ENCODE measurements at regions of chr5 and their contacts with region 1.

Region 1: GRCh38 chr5:148730943-148731861 is 76.9 kb upstream of the HTR4 start:
- DNase-seq: peak; percentile 89
- H3K4me3 Mint-ChIP-seq: peak overlapping the region; percentile 9
- H3K27ac Mint-ChIP-seq: peak overlapping the region; percentile 3
- H3K4me1 Mint-ChIP-seq: peaks cover 7% of the 10 kb centered on the region
- H3K27me3 Mint-ChIP-seq: peaks cover 17% of the 10 kb centered on the region

Region 2: DNA sequence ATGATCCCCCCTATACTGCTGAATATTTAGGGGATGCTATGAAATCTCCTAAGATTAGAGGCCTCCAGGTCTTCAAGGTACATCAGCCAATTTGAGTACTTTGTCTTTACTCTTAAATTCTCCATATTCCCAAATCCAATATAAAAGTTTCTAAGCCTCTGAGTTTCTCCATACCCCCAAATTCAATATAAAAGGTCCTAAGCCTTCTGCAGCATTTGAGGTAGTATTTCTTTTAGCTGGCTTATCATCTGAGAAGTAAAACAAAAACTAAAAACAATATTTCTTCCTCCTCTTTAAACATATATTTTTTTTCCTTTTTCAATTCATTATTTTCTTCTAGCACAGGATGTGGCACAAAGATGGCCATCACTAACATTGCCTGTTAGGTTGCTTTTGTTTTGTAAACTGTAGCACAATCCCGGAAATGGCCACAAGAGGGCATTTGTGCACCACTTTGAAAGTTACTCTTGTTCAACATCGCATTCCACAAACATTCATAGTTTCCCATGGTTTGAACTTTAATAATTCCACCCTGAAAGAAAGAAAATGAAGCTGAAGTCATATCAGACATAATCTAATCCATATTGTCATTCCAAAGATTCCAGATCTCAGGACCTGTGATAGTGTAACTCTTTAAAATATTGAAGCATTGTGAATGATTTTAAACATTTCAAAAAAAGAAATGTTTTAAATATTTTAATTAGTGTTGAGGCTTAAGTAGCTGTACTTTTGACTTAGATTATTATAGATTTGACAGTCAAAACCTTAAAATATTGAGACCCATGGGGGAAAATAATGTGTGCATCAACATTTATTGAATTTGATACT is 873.7 kb before region 1 on chr5:
- intact Hi-C with region 1: loop called (anchors 2 kb)
- DNase-seq: peak; percentile 82
- H3K4me3 Mint-ChIP-seq: no peak overlapping the region
- H3K27ac Mint-ChIP-seq: no peak overlapping the region
- H3K4me1 Mint-ChIP-seq: no peaks in the 10 kb centered on the region
- H3K27me3 Mint-ChIP-seq: peaks cover 13% of the 10 kb centered on the region

Region 3: GRCh38 chr5:148179234-148179824 is 551.9 kb before region 1 on chr5:
- intact Hi-C with region 1: loop called (anchors 1 kb)
- DNase-seq: peak; percentile 73
- H3K4me3 Mint-ChIP-seq: no peak overlapping the region
- H3K27ac Mint-ChIP-seq: no peak overlapping the region
- H3K4me1 Mint-ChIP-seq: peaks cover 3% of the 10 kb centered on the region
- H3K27me3 Mint-ChIP-seq: peaks cover 15% of the 10 kb centered on the region

Region 4: GRCh38 chr5:148482691-148483462 is 248.3 kb before region 1 on chr5:
- intact Hi-C with region 1: loop called (anchors 2 kb)
- DNase-seq: peak; percentile 88
- H3K4me3 Mint-ChIP-seq: no peak overlapping the region
- H3K27ac Mint-ChIP-seq: no peak overlapping the region
- H3K4me1 Mint-ChIP-seq: peaks cover 5% of the 10 kb centered on the region
- H3K27me3 Mint-ChIP-seq: peaks cover 32% of the 10 kb centered on the region

Region 5: DNA sequence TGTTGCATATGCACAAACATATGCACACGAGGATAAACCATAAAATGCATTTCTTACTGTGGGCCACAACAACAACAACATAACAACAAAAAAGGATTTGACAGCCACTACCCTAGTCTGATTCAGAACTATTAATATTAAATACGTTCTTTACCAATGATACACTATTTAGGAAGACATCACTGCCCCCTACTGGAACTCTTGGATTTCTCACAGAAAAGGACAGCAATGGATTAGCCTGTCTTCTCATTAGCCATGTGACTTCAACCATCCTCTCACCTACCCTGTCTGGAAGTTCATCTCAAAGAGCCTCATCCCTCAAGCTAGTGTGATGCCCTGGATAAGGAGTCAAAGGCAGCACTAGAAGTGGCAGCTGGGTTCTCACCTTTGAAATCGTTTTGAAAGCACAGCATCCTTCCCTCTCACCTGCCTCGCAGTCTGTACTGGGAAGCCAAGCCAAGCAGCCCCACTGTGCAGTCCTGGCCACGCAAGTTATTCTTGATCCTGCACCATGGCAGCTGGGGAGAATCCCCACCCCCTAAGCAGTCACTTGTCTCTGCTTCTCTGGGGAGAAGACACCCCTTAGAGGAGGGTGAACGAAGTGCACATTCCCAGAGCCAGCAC is 267.1 kb after region 1 on chr5:
- intact Hi-C with region 1: loop called (anchors 1 kb)
- DNase-seq: peak; percentile 76
- H3K4me3 Mint-ChIP-seq: no peak overlapping the region
- H3K27ac Mint-ChIP-seq: no peak overlapping the region
- H3K4me1 Mint-ChIP-seq: no peaks in the 10 kb centered on the region
- H3K27me3 Mint-ChIP-seq: peaks cover 40% of the 10 kb centered on the region

Region 6: GRCh38 chr5:149114403-149115312 is 383.5 kb after region 1 on chr5:
- intact Hi-C with region 1: loop called (anchors 2 kb)
- DNase-seq: peak; percentile 77
- H3K4me3 Mint-ChIP-seq: no peak overlapping the region
- H3K27ac Mint-ChIP-seq: no peak overlapping the region
- H3K4me1 Mint-ChIP-seq: peaks cover 8% of the 10 kb centered on the region
- H3K27me3 Mint-ChIP-seq: peaks cover 16% of the 10 kb centered on the region

Measured in activated CD4-positive, alpha-beta T cell treated with anti-CD3 and anti-CD28 coated beads, Interleukin-2, amount 10 ng/mL, durations not matched to agents 24 days and 14 days (primary cell).